ENCODE measurements at regions of chr9 and their contacts with region 1.

Region 1: GRCh38 chr9:133375724-133376654 is at the starts of genes STKLD1 and SURF4:
- DNase-seq: peak; percentile 97
- H3K4me3 ChIP-seq: peak within 1 kb of the TSS; percentile 91
- H3K27ac ChIP-seq: peak within 1 kb of the TSS; percentile 67
- H3K4me1 ChIP-seq: peaks cover 27% of the 10 kb centered on the region
- CTCF ChIP-seq: no peak
- total RNA-seq, gene STKLD1: 0.05 and 1.7 TPM in 2 replicates
- total RNA-seq, gene SURF4: 75.5 and 76.0 TPM in 2 replicates

Region 2: DNA sequence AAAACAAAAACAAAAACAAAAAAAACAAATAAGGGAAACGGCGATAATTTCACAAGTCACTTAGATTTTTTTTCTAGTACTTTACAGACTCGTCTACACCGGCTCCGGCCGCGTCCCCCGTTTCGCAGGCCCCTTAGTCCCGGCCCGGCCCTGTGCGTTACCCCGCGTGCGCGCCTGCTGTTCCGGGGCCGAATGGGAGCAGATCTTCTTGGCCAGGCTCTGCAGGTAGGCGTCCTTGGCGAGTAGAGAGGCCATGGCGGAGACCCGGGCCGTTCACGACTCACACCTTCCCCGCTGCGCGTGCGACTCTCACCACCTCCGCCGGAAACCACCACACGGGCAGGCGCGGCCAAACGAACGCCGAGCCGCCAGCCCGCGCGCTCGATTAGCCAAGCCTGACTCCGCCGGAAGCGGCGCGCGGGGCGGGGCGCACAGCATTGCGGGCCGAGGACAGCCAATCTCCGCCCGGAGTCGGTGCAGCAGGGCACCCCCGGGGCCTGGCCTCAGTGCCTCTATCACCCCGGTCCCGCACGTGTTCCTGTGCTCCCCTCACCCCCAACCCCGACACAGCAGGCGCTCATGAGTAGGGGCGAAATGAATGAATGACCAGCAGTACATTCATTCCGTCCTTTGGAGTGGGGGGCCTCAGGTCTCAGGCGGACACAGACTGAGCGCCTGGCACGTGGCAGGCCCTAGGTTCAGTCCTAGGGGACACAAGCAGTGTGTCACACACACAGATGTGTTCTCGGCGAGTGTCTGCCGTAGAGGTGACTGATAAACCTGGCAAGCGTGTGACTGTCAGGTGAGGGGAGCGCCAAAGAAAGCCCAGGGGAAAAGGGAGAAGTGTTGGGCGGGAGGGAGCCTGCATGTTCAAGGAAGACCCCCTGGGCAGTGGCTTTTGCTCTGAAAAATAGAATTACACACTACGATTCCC is 39.8 kb before region 1 on chr9 and contains the start of gene SURF6:
- CTCF ChIA-PET with region 1: no interaction called
- POLR2A ChIA-PET with region 1: no interaction called
- intact Hi-C with region 1: loop called (anchors 2 kb)
- DNase-seq: peak; percentile 94
- H3K4me3 ChIP-seq: peak within 1 kb of the TSS; percentile 86
- H3K27ac ChIP-seq: peak within 1 kb of the TSS; percentile 61
- H3K4me1 ChIP-seq: peaks cover 38% of the 10 kb centered on the region
- CTCF ChIP-seq: no peak
- total RNA-seq, gene SURF6: 19.2 and 33.9 TPM in 2 replicates

Region 3: DNA sequence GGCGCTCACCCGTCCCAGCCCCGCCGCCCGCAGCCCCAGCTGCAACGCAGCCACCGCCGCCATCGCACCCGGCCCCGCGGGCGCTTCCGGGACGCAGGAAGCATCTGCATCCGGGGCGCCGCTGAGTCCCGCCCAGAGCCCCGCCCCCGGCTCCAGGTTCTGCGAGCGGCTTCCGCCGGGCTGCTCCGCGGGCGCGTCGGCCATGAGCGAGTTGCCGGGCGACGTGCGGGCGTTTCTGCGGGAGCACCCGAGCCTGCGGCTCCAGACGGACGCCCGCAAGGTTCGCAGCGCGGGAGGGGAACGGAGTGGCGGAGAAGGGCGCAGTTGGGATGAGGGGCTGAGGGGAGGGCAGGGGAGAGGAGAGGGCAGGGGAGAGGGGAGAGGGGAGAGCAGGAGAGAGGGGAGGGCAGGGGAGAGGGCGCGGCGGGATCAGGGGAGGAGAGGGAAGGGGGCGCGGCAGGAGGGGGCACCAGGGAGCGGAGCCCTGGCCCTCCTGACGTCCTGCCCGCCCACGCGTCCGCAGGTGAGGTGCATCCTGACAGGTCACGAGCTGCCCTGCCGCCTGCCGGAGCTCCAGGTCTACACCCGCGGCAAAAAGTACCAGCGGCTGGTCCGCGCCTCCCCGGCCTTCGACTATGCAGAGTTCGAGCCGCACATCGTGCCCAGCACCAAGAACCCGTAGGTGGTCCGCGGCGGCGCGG is 19.4 kb before region 1 on chr9 and contains the starts of genes SURF1 and SURF2:
- CTCF ChIA-PET with region 1: interaction called, 3 read pairs
- POLR2A ChIA-PET with region 1: interaction called, 10 read pairs
- intact Hi-C with region 1: loop called (anchors 1 kb)
- DNase-seq: peak; percentile 92
- H3K4me3 ChIP-seq: peak within 1 kb of the TSS; percentile 78
- H3K27ac ChIP-seq: peak within 1 kb of the TSS; percentile 52
- H3K4me1 ChIP-seq: peaks cover 35% of the 10 kb centered on the region
- CTCF ChIP-seq: peak; percentile 41
- total RNA-seq, gene SURF1: 22.9 and 34.6 TPM in 2 replicates
- total RNA-seq, gene SURF2: 19.0 and 32.5 TPM in 2 replicates